Activated CD4-positive, alpha-beta memory T cell treated with anti-CD3 and anti-CD28 coated beads for 36 hours (primary cell): ENCODE measurements at regions of chr1 and their contacts with region 1.

Region 1: GRCh38 chr1:40691538-40692428 is at the start of gene NFYC:
- DNase-seq: peak; percentile 98
- H3K4me3 Mint-ChIP-seq: peak within 1 kb of the TSS; percentile 90
- H3K27ac Mint-ChIP-seq: peak within 1 kb of the TSS; percentile 90
- H3K4me1 Mint-ChIP-seq: peaks cover 59% of the 10 kb centered on the region
- H3K27me3 Mint-ChIP-seq: no peaks in the 10 kb centered on the region
- total RNA-seq, gene NFYC: 52.6 to 61.7 TPM

Region 2: GRCh38 chr1:40385437-40386358 is 306.1 kb before region 1 on chr1:
- CTCF ChIA-PET with region 1: no interaction called
- POLR2A ChIA-PET with region 1: no interaction called
- intact Hi-C with region 1: loop called (anchors 5 kb)
- DNase-seq: peak; percentile 77
- H3K4me3 Mint-ChIP-seq: peak overlapping the region; percentile 81
- H3K27ac Mint-ChIP-seq: peak overlapping the region; percentile 100
- H3K4me1 Mint-ChIP-seq: peaks cover 90% of the 10 kb centered on the region
- H3K27me3 Mint-ChIP-seq: no peaks in the 10 kb centered on the region

Region 3: DNA sequence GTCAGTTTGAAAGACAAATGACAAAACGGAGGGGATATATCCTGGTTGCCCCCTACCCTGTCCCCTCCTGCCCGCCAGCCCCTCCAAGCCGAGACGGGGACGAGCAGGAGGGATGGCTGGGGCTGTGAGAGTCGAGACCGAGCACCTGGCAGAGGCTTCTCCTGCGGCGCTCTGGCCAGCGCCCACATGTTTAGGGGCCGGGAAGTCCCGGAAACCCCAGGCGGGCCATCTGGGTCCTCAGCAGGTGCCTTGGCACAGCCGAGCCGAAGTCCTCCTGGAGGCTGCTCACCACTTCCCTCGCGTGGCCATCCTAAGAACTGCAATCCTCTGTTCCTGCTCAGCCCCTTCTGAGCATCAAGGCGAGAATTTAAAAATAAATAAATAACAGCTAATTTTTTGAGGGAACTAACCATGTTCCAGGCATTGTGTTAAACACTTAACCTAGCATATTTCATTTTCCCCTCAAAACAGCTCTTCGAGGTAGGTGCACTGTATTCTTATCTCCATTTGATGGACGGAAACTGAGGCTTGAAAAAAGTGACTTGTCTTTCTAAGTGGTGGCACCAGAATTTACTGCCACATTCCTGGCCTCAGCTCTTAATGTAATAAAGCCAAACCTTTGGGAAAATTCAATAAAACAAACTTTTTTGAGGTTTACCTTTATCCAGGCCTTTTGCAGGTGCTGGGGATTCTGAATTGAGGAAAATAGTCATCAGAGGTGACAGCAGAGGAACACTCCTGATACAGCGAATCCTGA is 22.8 kb before region 1 on chr1:
- CTCF ChIA-PET with region 1: interaction called, 18 read pairs
- POLR2A ChIA-PET with region 1: interaction called, 3 read pairs
- intact Hi-C with region 1: loop called (anchors 2 kb)
- DNase-seq: peak; percentile 91
- H3K4me3 Mint-ChIP-seq: peak overlapping the region; percentile 41
- H3K27ac Mint-ChIP-seq: no peak overlapping the region
- H3K4me1 Mint-ChIP-seq: peaks cover 7% of the 10 kb centered on the region
- H3K27me3 Mint-ChIP-seq: no peaks in the 10 kb centered on the region

Region 4: GRCh38 chr1:40742363-40743061 is 50.7 kb after region 1 on chr1:
- CTCF ChIA-PET with region 1: no interaction called
- POLR2A ChIA-PET with region 1: no interaction called
- intact Hi-C with region 1: loop called (anchors 2 kb)
- DNase-seq: peak; percentile 53
- H3K4me3 Mint-ChIP-seq: no peak overlapping the region
- H3K27ac Mint-ChIP-seq: peak overlapping the region; percentile 73
- H3K4me1 Mint-ChIP-seq: peaks cover 55% of the 10 kb centered on the region
- H3K27me3 Mint-ChIP-seq: no peaks in the 10 kb centered on the region

Region 5: GRCh38 chr1:40818264-40818961 is 126.6 kb after region 1 on chr1:
- CTCF ChIA-PET with region 1: no interaction called
- POLR2A ChIA-PET with region 1: interaction called, 3 read pairs
- intact Hi-C with region 1: loop called (anchors 1 kb)
- DNase-seq: peak; percentile 93
- H3K4me3 Mint-ChIP-seq: peak overlapping the region; percentile 74
- H3K27ac Mint-ChIP-seq: peak overlapping the region; percentile 33
- H3K4me1 Mint-ChIP-seq: peaks cover 14% of the 10 kb centered on the region
- H3K27me3 Mint-ChIP-seq: no peaks in the 10 kb centered on the region